Ascending aorta (tissue), 2 donors: ENCODE measurements at regions of chr20 and their contacts with region 1.

Region 1: GRCh38 chr20:13784893-13785715 is at the starts of genes ESF1 and NDUFAF5:
- DNase-seq: peak; percentile 89 to 97
- H3K4me3 ChIP-seq: peak within 1 kb of the TSS; percentile 71 to 83
- H3K27ac ChIP-seq: peak within 1 kb of the TSS; percentile 70 to 77
- H3K4me1 ChIP-seq: peaks cover 0 to 11% of the 10 kb centered on the region in 2 donors
- H3K27me3 ChIP-seq: no peaks in the 10 kb centered on the region
- CTCF ChIP-seq: no peak
- total RNA-seq, gene ESF1: 5.7 TPM
- total RNA-seq, gene NDUFAF5: 84.3 TPM

Region 2: DNA sequence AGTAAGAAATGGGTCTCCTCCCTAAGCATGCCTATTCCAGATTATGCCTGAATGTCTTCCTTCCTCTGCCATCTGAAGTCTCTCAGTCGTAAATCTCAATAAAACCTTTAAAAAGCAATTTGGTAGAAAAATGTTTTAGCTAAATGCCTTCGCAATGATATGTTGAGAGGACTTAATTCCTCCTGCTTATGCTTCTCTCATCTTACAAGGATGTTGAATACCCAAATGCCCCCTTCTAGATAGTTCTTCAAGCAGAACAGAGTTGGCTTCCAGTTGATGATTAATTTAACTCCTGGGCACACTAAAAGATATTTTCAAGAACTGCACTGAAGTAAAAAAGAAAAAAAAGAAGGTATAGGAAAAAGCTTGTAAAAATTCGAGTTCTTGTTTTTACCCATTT is 1051.3 kb before region 1 on chr20:
- intact Hi-C with region 1: loop called (anchors 1 kb)
- DNase-seq: no peak
- H3K4me3 ChIP-seq: no peak overlapping the region
- H3K27ac ChIP-seq: no peak overlapping the region
- H3K4me1 ChIP-seq: peaks cover 9 to 20% of the 10 kb centered on the region in 2 donors
- H3K27me3 ChIP-seq: no peaks in the 10 kb centered on the region
- CTCF ChIP-seq: no peak

Region 3: GRCh38 chr20:14288341-14289330 is 503.5 kb after region 1 on chr20:
- intact Hi-C with region 1: no loop called
- DNase-seq: no peak
- H3K4me3 ChIP-seq: no peak overlapping the region
- H3K27ac ChIP-seq: no peak overlapping the region
- H3K4me1 ChIP-seq: no peaks in the 10 kb centered on the region
- H3K27me3 ChIP-seq: no peaks in the 10 kb centered on the region
- CTCF ChIP-seq: no peak